Naive thymus-derived CD4-positive, alpha-beta T cell (primary cell): ENCODE measurements at regions of chr3 and their contacts with region 1.

Region 1: DNA sequence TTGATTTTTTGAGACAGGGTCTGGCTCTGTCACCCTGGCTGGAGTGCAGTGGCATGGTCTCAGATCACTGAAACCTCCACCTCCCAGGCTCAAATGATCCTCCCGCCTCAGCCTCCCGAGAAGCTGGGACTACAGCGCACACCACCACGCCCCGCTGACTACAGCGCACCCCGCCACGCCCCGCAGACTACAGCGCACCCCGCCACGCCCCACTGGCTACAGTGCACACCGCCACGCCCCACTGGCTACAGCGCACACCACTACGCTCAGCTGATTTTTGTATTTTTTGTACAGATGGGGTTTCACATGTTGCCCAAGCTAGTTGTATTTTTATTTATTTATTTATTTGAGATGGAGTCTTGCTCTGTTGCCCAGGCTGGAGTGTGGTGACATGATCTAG is 35.6 kb downstream of the SLC51A start:
- DNase-seq: no peak
- ATAC-seq: no peak
- H3K4me3 ChIP-seq: no peak overlapping the region
- H3K4me3 Mint-ChIP-seq: no peak overlapping the region
- H3K27ac ChIP-seq: no peak overlapping the region
- H3K27ac Mint-ChIP-seq: no peak overlapping the region
- H3K4me1 ChIP-seq: no peaks in the 10 kb centered on the region
- H3K4me1 Mint-ChIP-seq: peaks cover 0 to 8% (median 2%) of the 10 kb centered on the region in 7 donors
- H3K27me3 ChIP-seq: no peaks in the 10 kb centered on the region
- H3K27me3 Mint-ChIP-seq: no peaks in the 10 kb centered on the region

Region 2: DNA sequence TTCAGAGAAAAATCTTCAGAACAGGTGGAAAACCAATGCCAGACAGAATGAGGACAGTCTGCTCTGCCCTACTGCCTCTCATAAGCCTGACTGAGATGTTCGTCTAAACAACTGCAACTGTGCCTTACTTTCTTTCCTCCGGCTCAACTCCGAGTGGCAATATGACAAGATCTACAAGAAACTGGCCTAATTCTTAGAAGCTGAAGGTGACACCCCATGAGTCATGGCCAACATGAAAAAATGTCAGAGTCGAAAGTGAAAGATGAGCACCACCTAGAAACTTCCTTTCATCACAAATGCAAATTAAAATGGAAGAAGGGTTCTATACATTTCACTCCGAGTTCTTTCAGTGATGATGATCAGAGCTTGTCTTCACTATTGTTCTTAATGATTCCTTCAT is 22.7 kb after region 1 on chr3:
- CTCF ChIA-PET with region 1: no interaction called
- POLR2A ChIA-PET with region 1: no interaction called
- intact Hi-C with region 1: loop called in 1 of 2 experiments (anchors 1 kb)
- DNase-seq: peak in 8 of 9 donors; percentile 20 to 72 (median 42)
- ATAC-seq: peak; percentile 91
- H3K4me3 ChIP-seq: peak overlapping the region; percentile 7
- H3K4me3 Mint-ChIP-seq: peak overlapping the region; percentile 41 to 84 (median 74)
- H3K27ac ChIP-seq: peak overlapping the region; percentile 50
- H3K27ac Mint-ChIP-seq: peak overlapping the region; percentile 57 to 96 (median 89)
- H3K4me1 ChIP-seq: peaks cover 10 to 21% of the 10 kb centered on the region in 2 donors
- H3K4me1 Mint-ChIP-seq: peaks cover 19 to 62% (median 37%) of the 10 kb centered on the region in 7 donors
- H3K27me3 ChIP-seq: no peaks in the 10 kb centered on the region
- H3K27me3 Mint-ChIP-seq: no peaks in the 10 kb centered on the region

Region 3: DNA sequence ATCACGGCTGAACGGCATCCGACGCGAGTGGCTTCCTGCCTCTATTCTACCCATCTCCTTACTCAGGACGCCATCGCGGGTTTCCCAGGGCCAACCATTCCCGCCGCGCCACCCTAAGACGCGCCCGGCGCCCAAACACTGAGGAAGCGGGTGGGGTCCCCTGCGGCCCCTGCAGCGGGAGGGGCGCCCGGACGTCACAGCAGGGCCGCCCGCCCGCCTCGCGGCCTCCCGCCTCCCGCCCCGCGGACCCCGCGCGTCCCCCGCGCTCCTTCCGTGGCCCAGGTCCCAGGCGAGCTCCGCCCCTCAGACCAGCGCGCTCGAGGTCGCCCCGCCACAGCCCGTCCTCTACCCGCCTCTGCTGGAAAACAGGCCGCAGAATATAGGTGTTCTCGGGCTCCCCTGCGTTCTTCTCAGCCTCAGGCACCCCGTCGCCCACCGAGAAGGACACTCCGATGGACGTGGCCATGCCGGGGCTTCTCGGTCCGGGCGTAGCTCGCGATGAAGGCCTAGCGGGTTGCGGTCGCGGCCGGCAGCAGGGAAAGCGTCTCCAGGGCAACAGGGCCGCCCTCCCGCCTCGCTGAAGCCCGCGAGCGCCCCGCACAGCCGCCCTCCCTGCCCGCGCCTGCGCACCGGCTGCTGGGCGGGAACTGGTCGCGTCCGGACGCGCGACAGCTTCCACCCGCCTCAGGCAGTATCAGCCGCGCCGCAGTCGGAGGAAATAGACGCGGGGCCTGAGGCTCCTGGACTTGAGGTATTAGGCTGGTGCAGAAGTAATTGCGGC is 66.0 kb after region 1 on chr3 and contains the start of gene DYNLT2B:
- CTCF ChIA-PET with region 1: no interaction called
- POLR2A ChIA-PET with region 1: no interaction called
- intact Hi-C with region 1: loop called (anchors 1 kb)
- DNase-seq: peak; percentile 82 to 91 (median 88)
- ATAC-seq: peak; percentile 94
- H3K4me3 ChIP-seq: peak within 1 kb of the TSS; percentile 89
- H3K4me3 Mint-ChIP-seq: peak within 1 kb of the TSS; percentile 82 to 95 (median 94)
- H3K27ac ChIP-seq: peak within 1 kb of the TSS; percentile 90
- H3K27ac Mint-ChIP-seq: peak within 1 kb of the TSS; percentile 88 to 98 (median 94)
- H3K4me1 ChIP-seq: no peaks in the 10 kb centered on the region
- H3K4me1 Mint-ChIP-seq: peaks cover 0 to 23% (median 9%) of the 10 kb centered on the region in 7 donors
- H3K27me3 ChIP-seq: no peaks in the 10 kb centered on the region
- H3K27me3 Mint-ChIP-seq: no peaks in the 10 kb centered on the region
- total RNA-seq, gene DYNLT2B: 3.3 to 20.8 (median 5.1) TPM

Region 4: DNA sequence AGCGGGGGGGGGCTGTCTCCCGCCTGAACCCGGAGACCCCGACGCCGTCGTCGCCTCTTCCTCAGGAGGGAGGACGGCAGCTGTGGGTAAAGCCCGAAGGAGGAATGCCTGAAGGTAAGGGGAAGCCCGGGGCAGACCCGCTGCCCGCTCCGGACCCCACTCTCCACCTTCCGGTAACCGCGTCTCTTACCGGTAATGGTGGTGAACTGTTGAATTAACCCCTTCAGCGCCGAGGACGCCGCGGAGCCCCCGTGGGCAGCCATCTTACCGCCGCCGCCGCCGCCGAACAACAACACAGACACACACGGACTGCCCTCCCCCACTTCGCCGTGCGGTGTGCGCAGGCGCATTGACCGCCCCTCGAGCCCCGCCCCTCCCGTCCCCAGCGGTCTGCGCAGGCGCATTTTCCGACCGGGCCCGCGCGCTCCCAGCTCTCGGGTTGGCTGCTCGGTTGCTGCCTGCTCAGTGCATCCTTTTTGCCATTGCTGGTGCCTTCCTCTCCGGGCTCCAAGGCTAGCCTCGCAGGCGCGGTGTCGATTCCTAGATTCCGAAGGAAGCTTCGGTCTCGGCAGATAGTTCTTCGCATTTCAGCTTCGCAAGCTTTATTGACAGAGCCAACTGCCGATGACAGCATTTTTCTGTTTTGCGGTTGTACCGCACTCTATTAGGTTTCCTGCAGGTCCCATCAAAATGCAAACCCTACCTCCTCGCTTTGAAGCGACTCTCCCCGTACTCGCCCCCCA is 180.4 kb after region 1 on chr3 and contains the start of gene UBXN7:
- CTCF ChIA-PET with region 1: no interaction called
- POLR2A ChIA-PET with region 1: no interaction called
- intact Hi-C with region 1: loop called in 1 of 2 experiments (anchors 5 kb)
- DNase-seq: peak; percentile 92 to 97 (median 95)
- ATAC-seq: peak; percentile 94
- H3K4me3 ChIP-seq: peak within 1 kb of the TSS; percentile 100
- H3K4me3 Mint-ChIP-seq: peak within 1 kb of the TSS; percentile 81 to 98 (median 86)
- H3K27ac ChIP-seq: peak within 1 kb of the TSS; percentile 90
- H3K27ac Mint-ChIP-seq: peak within 1 kb of the TSS; percentile 68 to 95 (median 81)
- H3K4me1 ChIP-seq: peaks cover 4 to 6% of the 10 kb centered on the region in 2 donors
- H3K4me1 Mint-ChIP-seq: peaks cover 17 to 39% (median 32%) of the 10 kb centered on the region in 7 donors
- H3K27me3 ChIP-seq: no peaks in the 10 kb centered on the region
- H3K27me3 Mint-ChIP-seq: peaks cover 0 to 2% (median 0%) of the 10 kb centered on the region in 5 donors
- total RNA-seq, gene UBXN7: 52.6 to 90.6 (median 77.0) TPM

Region 5: DNA sequence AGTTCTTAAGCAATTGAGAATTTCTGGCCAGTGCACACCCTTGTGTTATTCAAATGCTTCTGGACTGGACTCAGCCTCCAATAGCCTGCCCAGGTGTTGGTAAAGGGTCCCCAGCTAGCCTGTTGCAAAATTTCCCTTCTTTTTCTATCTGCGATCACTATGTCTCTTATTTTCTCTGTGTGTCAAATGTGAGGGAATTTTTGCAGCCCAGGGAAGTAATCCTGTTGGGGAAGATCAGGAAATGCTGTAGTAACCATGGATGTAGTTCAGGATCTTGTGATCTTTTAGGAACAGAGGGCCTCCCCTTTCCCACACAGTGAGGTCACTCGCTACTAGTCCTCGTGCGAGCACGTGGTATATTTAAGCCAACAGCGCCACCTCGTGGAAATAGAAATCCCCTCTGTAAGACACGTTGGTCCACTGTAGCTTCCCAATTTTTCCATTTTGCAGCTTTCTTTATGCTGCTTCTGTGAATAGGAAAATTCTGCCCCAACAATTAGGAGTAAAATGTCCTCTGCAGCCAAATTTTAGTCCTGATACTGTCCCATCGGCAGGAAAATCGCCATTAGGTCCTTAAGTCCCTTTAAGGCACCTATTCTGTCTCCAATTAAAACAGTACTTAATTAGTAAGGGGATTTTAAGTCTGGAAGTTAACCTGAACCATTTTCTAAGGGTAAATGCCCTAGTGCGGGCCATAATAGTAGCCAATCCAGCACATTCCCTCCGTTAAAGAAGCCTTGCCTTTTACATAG is 267.2 kb after region 1 on chr3:
- CTCF ChIA-PET with region 1: interaction called, 4 read pairs
- POLR2A ChIA-PET with region 1: no interaction called
- intact Hi-C with region 1: loop called (anchors 1 kb)
- DNase-seq: peak in 3 of 9 donors; percentile 16 to 52 (median 19)
- ATAC-seq: peak; percentile 63
- H3K4me3 ChIP-seq: no peak overlapping the region
- H3K4me3 Mint-ChIP-seq: no peak overlapping the region
- H3K27ac ChIP-seq: no peak overlapping the region
- H3K27ac Mint-ChIP-seq: no peak overlapping the region
- H3K4me1 ChIP-seq: no peaks in the 10 kb centered on the region
- H3K4me1 Mint-ChIP-seq: no peaks in the 10 kb centered on the region
- H3K27me3 ChIP-seq: no peaks in the 10 kb centered on the region
- H3K27me3 Mint-ChIP-seq: peaks cover 0 to 6% (median 0%) of the 10 kb centered on the region in 5 donors

Region 6: GRCh38 chr3:196639483-196640296 is 387.8 kb after region 1 on chr3 and contains the start of gene NRROS:
- CTCF ChIA-PET with region 1: no interaction called
- POLR2A ChIA-PET with region 1: no interaction called
- intact Hi-C with region 1: no loop called
- DNase-seq: peak; percentile 25 to 71 (median 46)
- ATAC-seq: peak; percentile 70
- H3K4me3 ChIP-seq: peak within 1 kb of the TSS; percentile 75
- H3K4me3 Mint-ChIP-seq: peak within 1 kb of the TSS; percentile 75 to 94 (median 92)
- H3K27ac ChIP-seq: peak within 1 kb of the TSS; percentile 79
- H3K27ac Mint-ChIP-seq: peak within 1 kb of the TSS; percentile 74 to 95 (median 92)
- H3K4me1 ChIP-seq: peaks cover 27 to 36% of the 10 kb centered on the region in 2 donors
- H3K4me1 Mint-ChIP-seq: peaks cover 49 to 92% (median 71%) of the 10 kb centered on the region in 7 donors
- H3K27me3 ChIP-seq: no peaks in the 10 kb centered on the region
- H3K27me3 Mint-ChIP-seq: no peaks in the 10 kb centered on the region
- total RNA-seq, gene NRROS: 9.8 to 53.3 (median 14.2) TPM